AG04450 (cell line): ENCODE measurements at regions of chr5 and their contacts with region 1.

Region 1: GRCh38 chr5:177537389-177538361 is 16.7 kb downstream of the FAM193B start:
- DNase-seq: peak; percentile 76
- H3K4me3 ChIP-seq: no peak overlapping the region
- H3K27ac ChIP-seq: peak overlapping the region; percentile 94
- H3K27me3 ChIP-seq: no peaks in the 10 kb centered on the region
- CTCF ChIP-seq: no peak

Region 2: DNA sequence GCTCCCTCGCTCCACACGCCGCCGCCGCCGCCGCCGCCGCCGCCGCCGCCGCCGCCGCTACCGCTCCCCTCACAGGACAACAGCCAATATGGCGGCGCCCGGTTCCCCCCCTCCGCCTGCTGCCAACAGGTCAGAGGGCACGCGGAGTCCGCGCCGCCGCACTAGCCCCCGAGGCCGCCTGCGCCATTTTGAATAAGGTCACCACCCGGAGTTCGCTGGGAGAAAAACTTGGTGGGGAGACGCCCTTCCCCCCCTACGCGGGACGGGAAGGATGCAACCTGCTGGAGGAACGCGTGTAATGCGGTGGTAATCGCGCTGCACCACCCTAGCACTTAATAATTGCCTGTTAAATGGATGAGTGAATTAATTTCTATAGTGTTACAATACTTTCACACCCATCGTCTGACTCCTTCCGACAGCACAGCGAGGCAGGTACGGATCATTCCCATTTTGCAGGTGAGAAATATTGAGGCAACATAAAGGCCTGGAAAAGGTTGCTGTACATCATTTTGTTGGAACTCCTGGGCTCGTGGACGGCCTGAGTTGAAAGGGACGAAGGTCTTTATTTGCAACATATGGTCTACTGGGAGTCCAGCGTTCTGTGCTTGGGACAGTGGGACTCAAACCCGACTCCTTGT is 16.9 kb after region 1 on chr5 and contains the start of gene FAM193B:
- CTCF ChIA-PET with region 1: no interaction called
- POLR2A ChIA-PET with region 1: interaction called, 11 read pairs
- DNase-seq: peak; percentile 72
- H3K4me3 ChIP-seq: peak within 1 kb of the TSS; percentile 86
- H3K27ac ChIP-seq: peak within 1 kb of the TSS; percentile 21
- H3K27me3 ChIP-seq: peaks cover 4% of the 10 kb centered on the region
- CTCF ChIP-seq: peak; percentile 49
- polyA plus RNA-seq, gene FAM193B: 28.7 and 30.1 TPM in 2 replicates

Region 3: DNA sequence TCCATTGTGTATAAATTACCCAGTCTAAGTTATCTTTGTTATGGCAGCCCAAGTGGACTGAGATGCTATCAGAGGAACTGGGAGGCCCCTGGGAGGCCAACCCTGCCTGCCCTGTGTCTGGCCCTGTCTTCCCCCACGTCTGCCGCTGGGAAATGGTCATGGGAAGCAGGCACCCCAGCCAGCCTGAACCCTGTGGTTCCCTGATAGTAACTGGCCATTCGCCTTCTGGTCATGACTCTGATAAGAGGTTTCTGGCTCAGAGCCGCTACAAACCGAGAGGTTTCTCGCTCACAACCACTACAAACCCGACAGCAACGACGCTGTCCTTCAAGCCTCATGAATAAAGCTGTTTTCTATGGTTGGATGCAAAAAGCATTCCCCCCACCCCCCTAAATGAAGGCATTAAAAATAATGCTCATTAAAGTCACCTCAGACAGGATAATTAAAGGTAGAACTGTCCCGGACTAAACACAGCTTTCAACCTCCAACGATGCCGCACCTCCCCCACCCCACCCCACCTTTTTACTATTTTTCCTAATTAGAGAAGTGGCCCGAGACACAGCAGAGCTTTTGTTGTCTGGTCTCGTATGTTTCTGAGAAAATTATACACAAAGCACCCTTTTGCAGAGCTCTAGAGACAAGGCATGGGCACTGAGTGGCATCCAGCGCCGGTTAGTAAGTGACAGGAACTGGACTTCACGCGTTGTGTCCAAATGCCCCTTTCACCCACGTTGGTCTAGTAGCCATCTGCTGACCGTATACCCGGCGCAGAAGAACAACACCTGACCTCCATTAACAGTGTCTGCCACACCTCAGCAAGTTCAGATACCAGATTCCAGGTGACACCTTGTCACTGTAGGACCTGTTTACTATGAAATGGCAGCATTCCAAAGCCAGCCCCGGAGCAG is 911.7 kb after region 1 on chr5:
- CTCF ChIA-PET with region 1: no interaction called
- POLR2A ChIA-PET with region 1: no interaction called
- DNase-seq: no peak
- H3K4me3 ChIP-seq: no peak overlapping the region
- H3K27ac ChIP-seq: no peak overlapping the region
- H3K27me3 ChIP-seq: no peaks in the 10 kb centered on the region
- CTCF ChIP-seq: no peak